ENCODE measurements at regions of chr15 and their contacts with region 1.

Region 1: GRCh38 chr15:43285609-43286037 is 18.9 kb upstream of the TGM5 start:
- DNase-seq: peak; percentile 17
- H3K4me3 ChIP-seq: no peak overlapping the region
- CTCF ChIP-seq: peak; percentile 76

Region 2: GRCh38 chr15:42973114-42973513 is 312.5 kb before region 1 on chr15:
- CTCF ChIA-PET with region 1: no interaction called
- POLR2A ChIA-PET with region 1: no interaction called
- DNase-seq: no peak
- H3K4me3 ChIP-seq: no peak overlapping the region
- CTCF ChIP-seq: no peak

Region 3: DNA sequence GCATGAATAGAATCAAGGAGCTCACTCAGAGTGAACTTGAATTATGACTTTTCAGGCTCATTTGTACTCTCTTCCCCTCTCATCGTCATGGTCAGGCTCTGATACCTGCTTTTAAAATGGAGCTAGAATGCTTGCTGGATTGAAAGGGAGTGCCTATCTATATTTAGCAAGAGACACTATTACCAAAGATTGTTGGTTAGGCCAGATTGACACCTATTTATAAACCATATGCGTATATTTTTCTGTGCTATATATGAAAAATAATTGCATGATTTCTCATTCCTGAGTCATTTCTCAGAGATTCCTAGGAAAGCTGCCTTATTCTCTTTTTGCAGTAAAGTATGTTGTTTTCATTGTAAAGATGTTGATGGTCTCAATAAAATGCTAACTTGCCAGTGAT is 90.8 kb before region 1 on chr15:
- CTCF ChIA-PET with region 1: interaction called, 40 read pairs
- POLR2A ChIA-PET with region 1: no interaction called
- DNase-seq: no peak
- H3K4me3 ChIP-seq: no peak overlapping the region
- CTCF ChIP-seq: no peak

Region 4: GRCh38 chr15:43218908-43219706 is 66.5 kb before region 1 on chr15:
- CTCF ChIA-PET with region 1: interaction called, 434 read pairs
- POLR2A ChIA-PET with region 1: no interaction called
- DNase-seq: no peak
- H3K4me3 ChIP-seq: no peak overlapping the region
- CTCF ChIP-seq: peak; percentile 11

Region 5: GRCh38 chr15:43246261-43246774 is 39.3 kb before region 1 on chr15:
- CTCF ChIA-PET with region 1: interaction called, 12 read pairs
- POLR2A ChIA-PET with region 1: no interaction called
- DNase-seq: no peak
- H3K4me3 ChIP-seq: no peak overlapping the region
- CTCF ChIP-seq: no peak

Region 6: GRCh38 chr15:43302205-43302817 is 16.7 kb after region 1 on chr15:
- CTCF ChIA-PET with region 1: interaction called, 16 read pairs
- POLR2A ChIA-PET with region 1: no interaction called
- DNase-seq: no peak
- H3K4me3 ChIP-seq: no peak within 1 kb of the TSS
- CTCF ChIP-seq: no peak

Measured in AG04449 (cell line).